GM12878 (cell line): ENCODE measurements at regions of chr3 and their contacts with region 1.

Region 1: GRCh38 chr3:133136114-133137046 is 98.2 kb downstream of the TMEM108 start:
- DNase-seq: peak; percentile 50
- ATAC-seq: peak; percentile 89
- H3K4me3 ChIP-seq: no peak overlapping the region
- H3K27ac ChIP-seq: no peak overlapping the region
- H3K4me1 ChIP-seq: peaks cover 22% of the 10 kb centered on the region
- H3K27me3 ChIP-seq: no peaks in the 10 kb centered on the region
- CTCF ChIP-seq: no peak
- EP300 ChIP-seq: peak in 1 of 2 experiments; percentile 71; a peak in 1 of 4 replicates
- POLR2A ChIP-seq: no peak
- RAD21 ChIP-seq: no peak

Region 2: GRCh38 chr3:133211449-133211848 is 75.1 kb after region 1 on chr3:
- CTCF ChIA-PET with region 1: no interaction called
- POLR2A ChIA-PET with region 1: no interaction called
- RAD21 ChIA-PET with region 1: no interaction called
- SMC1A ChIA-PET with region 1: interaction called, 3 read pairs
- in situ Hi-C with region 1: no loop called
- intact Hi-C with region 1: loop called (anchors 2 kb)
- DNase-seq: peak; percentile 78
- ATAC-seq: peak; percentile 99
- H3K4me3 ChIP-seq: no peak overlapping the region
- H3K27ac ChIP-seq: no peak overlapping the region; the same call in 1 of the 2 replicates
- H3K4me1 ChIP-seq: peaks cover 29% of the 10 kb centered on the region
- H3K27me3 ChIP-seq: no peaks in the 10 kb centered on the region
- CTCF ChIP-seq: no peak
- EP300 ChIP-seq: peak; percentile 17 to 61; a peak in 1 of 4 replicates
- POLR2A ChIP-seq: no peak
- RAD21 ChIP-seq: no peak